PC-9 (cell line): ENCODE measurements at regions of chr1 and their contacts with region 1.

Region 1: DNA sequence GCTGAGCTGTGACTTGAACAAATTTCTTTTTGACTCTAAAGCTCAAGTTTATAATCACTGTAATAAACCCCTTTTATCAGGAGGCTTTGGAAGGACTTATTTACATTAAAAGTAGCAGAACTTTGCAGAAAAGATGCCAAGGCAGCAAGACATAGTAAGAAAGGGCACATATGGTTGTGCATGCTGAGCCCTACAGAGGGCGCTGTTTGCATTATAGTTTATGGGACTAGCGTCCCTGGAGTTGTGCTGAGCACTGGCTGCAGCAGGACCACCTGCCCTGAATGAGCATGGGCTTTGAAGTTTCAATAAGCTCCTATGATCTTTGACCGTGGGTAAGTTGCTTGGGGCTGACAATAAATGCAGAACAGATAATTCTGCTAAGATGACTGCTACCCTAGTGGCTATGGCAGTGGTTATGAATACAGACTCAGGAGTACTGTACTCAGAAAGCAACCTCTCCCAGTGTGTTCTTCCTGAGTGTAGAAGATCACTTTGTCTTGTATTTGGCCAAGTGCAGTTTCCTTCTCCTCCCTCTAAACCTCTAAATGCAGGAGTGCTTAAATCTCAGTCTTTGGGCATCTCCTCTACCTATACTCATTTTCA is 45.4 kb upstream of the USP1 start:
- DNase-seq: no peak
- H3K4me3 ChIP-seq: no peak overlapping the region
- H3K27ac ChIP-seq: no peak overlapping the region
- H3K4me1 ChIP-seq: peaks cover 27% of the 10 kb centered on the region
- H3K27me3 ChIP-seq: no peaks in the 10 kb centered on the region
- CTCF ChIP-seq: peak; percentile 66

Region 2: GRCh38 chr1:61368876-61369275 is 1022.6 kb before region 1 on chr1:
- CTCF ChIA-PET with region 1: no interaction called
- POLR2A ChIA-PET with region 1: no interaction called
- intact Hi-C with region 1: no loop called
- DNase-seq: no peak
- H3K4me3 ChIP-seq: no peak overlapping the region
- H3K27ac ChIP-seq: no peak overlapping the region
- H3K4me1 ChIP-seq: no peaks in the 10 kb centered on the region
- H3K27me3 ChIP-seq: no peaks in the 10 kb centered on the region
- CTCF ChIP-seq: no peak

Region 3: DNA sequence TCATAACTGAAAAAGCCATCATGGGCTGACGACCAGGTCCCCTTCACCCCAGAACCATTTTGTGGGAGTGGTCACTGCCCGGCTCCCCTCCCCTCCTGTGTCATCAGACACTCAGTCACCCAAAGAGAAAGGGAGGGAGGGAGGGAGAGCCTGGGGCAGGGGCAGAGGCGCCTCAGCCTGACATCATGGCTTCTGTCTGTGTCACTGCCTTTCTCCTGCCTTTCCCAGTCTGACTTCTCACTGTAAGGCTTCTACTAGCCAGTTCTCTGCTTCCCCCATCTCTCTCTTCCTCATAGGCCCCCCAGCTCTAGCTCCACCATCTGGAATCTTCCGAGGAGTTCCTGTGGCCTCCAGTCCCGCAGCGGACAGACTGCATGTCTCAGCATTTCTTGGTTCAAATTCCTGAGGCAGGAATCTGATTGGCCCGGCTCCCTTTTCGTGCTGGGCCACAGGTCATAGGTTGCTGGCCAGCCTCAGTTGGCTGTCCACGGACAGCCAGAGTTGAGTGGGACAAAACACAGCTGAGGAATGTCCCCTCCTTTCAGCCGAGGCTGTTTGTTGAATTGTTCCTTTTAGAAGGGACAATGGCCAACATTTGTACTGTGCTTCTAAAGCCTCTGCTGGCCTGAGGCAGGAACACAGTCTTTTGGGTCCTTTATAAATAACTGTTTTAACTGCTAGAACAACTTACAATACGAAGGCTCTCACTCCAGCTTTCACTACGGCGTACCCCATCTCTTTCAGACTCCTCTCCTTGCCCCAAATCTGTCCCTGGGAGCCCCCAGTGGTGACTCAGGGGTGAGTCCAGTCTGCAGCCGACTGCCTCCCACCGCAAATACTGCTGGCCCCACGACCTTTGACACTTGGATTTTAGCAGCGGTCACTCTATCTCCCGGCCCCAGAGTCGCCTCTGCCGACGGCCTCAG is 53.5 kb before region 1 on chr1:
- CTCF ChIA-PET with region 1: interaction called, 12 read pairs
- POLR2A ChIA-PET with region 1: no interaction called
- intact Hi-C with region 1: no loop called
- DNase-seq: no peak
- H3K4me3 ChIP-seq: no peak overlapping the region
- H3K27ac ChIP-seq: no peak overlapping the region
- H3K4me1 ChIP-seq: no peaks in the 10 kb centered on the region
- H3K27me3 ChIP-seq: no peaks in the 10 kb centered on the region
- CTCF ChIP-seq: no peak